Psoas muscle (tissue), 8 donors: ENCODE measurements at regions of chr15 and their contacts with region 1.

Region 1: GRCh38 chr15:98779463-98780071 is 131.2 kb downstream of the IGF1R start:
- DNase-seq: peak; percentile 79 to 90
- ATAC-seq: peak; percentile 93 to 98 (median 96)
- H3K4me3 ChIP-seq: peak overlapping the region; percentile 6
- H3K27ac ChIP-seq: no peak overlapping the region
- H3K4me1 ChIP-seq: peaks cover 27% of the 10 kb centered on the region
- H3K27me3 ChIP-seq: no peaks in the 10 kb centered on the region
- CTCF ChIP-seq: peak; percentile 96

Region 2: GRCh38 chr15:98525661-98526001 is 253.9 kb before region 1 on chr15:
- intact Hi-C with region 1: loop called in 1 of 2 experiments (anchors 10 kb)
- DNase-seq: no peak
- ATAC-seq: no peak
- H3K4me3 ChIP-seq: no peak overlapping the region
- H3K27ac ChIP-seq: no peak overlapping the region
- H3K4me1 ChIP-seq: no peaks in the 10 kb centered on the region
- H3K27me3 ChIP-seq: peaks cover 0 to 10% (median 0%) of the 10 kb centered on the region in 3 donors
- CTCF ChIP-seq: no peak

Region 3: GRCh38 chr15:98745650-98746622 is 33.6 kb before region 1 on chr15:
- intact Hi-C with region 1: no loop called
- DNase-seq: no peak
- ATAC-seq: no peak
- H3K4me3 ChIP-seq: no peak overlapping the region
- H3K27ac ChIP-seq: no peak overlapping the region
- H3K4me1 ChIP-seq: peaks cover 19% of the 10 kb centered on the region
- H3K27me3 ChIP-seq: no peaks in the 10 kb centered on the region
- CTCF ChIP-seq: no peak